Activated CD4-positive, alpha-beta memory T cell treated with anti-CD3 and anti-CD28 coated beads for 36 hours (primary cell): ENCODE measurements at regions of chr9 and their contacts with region 1.

Region 1: GRCh38 chr9:132901856-132902831 is 23.4 kb downstream of the SPACA9 start:
- DNase-seq: peak; percentile 89
- H3K4me3 Mint-ChIP-seq: no peak overlapping the region
- H3K27ac Mint-ChIP-seq: no peak overlapping the region
- H3K4me1 Mint-ChIP-seq: peaks cover 8% of the 10 kb centered on the region
- H3K27me3 Mint-ChIP-seq: no peaks in the 10 kb centered on the region

Region 2: GRCh38 chr9:132669698-132670456 is 232.3 kb before region 1 on chr9 and contains the start of gene DDX31:
- CTCF ChIA-PET with region 1: interaction called, 12 read pairs
- POLR2A ChIA-PET with region 1: no interaction called
- intact Hi-C with region 1: no loop called
- DNase-seq: peak; percentile 89
- H3K4me3 Mint-ChIP-seq: peak within 1 kb of the TSS; percentile 86
- H3K27ac Mint-ChIP-seq: peak within 1 kb of the TSS; percentile 87
- H3K4me1 Mint-ChIP-seq: peaks cover 44% of the 10 kb centered on the region
- H3K27me3 Mint-ChIP-seq: no peaks in the 10 kb centered on the region
- total RNA-seq, gene DDX31: 17.2 to 18.8 TPM

Region 3: GRCh38 chr9:132849185-132849706 is 52.9 kb before region 1 on chr9:
- CTCF ChIA-PET with region 1: interaction called, 18 read pairs
- POLR2A ChIA-PET with region 1: no interaction called
- intact Hi-C with region 1: loop called (anchors 5 kb)
- DNase-seq: peak; percentile 23
- H3K4me3 Mint-ChIP-seq: peak overlapping the region; percentile 1
- H3K27ac Mint-ChIP-seq: peak overlapping the region; percentile 49
- H3K4me1 Mint-ChIP-seq: peaks cover 6% of the 10 kb centered on the region
- H3K27me3 Mint-ChIP-seq: no peaks in the 10 kb centered on the region

Region 4: GRCh38 chr9:132919614-132920268 is 17.6 kb after region 1 on chr9:
- CTCF ChIA-PET with region 1: interaction called, 20 read pairs
- POLR2A ChIA-PET with region 1: no interaction called
- intact Hi-C with region 1: no loop called
- DNase-seq: no peak
- H3K4me3 Mint-ChIP-seq: no peak overlapping the region
- H3K27ac Mint-ChIP-seq: no peak overlapping the region
- H3K4me1 Mint-ChIP-seq: no peaks in the 10 kb centered on the region
- H3K27me3 Mint-ChIP-seq: no peaks in the 10 kb centered on the region

Region 5: DNA sequence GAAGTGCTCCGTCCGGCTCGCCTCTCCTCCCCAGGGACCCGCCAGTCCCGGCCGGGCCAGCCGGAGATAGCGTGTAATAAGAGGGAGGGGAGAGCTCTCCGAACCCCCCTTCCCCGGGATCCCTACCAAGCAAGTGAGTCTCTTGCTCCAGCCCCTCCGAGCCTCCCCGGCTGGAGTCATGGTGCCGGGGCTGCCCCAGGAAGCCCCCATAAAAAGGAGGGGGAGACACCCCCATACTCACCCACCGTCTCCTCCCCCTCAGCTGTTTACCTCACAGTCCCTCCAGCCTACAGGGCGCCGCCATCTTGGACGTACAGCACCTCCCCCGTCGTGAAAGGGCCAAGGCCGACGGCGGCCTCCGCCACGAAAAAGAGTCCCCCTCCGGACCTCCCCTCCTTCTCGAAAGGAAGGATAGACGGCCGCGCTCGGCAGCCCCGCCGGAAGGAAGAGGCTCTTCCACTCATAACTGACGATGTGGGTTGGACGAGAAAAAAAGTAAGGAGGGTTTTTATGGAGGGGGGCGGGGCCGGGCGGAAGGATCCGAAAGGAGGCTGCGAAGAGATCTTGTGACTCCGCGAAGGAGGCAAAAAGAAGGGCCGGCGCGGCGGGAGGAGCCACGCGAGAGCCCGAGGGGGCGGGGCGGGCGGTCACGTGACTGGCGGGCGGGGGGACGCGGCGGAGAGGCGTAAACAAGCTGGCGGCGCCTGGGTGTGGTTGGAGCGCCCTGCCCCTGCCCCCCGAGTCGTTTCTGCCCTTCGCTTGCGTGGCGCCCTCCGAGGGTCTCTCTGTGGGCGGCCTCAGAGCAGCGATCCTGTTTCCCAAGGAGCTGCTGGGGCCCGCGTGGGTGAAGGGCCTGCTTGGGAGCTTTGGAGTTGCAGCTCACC is 42.4 kb after region 1 on chr9 and contains the start of gene TSC1:
- CTCF ChIA-PET with region 1: interaction called, 12 read pairs
- POLR2A ChIA-PET with region 1: no interaction called
- intact Hi-C with region 1: no loop called
- DNase-seq: peak; percentile 98
- H3K4me3 Mint-ChIP-seq: peak within 1 kb of the TSS; percentile 84
- H3K27ac Mint-ChIP-seq: peak within 1 kb of the TSS; percentile 95
- H3K4me1 Mint-ChIP-seq: peaks cover 26% of the 10 kb centered on the region
- H3K27me3 Mint-ChIP-seq: no peaks in the 10 kb centered on the region
- total RNA-seq, gene TSC1: 19.6 to 23.6 TPM